ENCODE measurements at regions of chr1 and their contacts with region 1.

Region 1: GRCh38 chr1:70487910-70488665 is 77.0 kb downstream of the CTH start:
- DNase-seq: peak; percentile 33
- H3K4me3 ChIP-seq: no peak overlapping the region
- H3K27ac ChIP-seq: no peak overlapping the region
- H3K4me1 ChIP-seq: peaks cover 19% of the 10 kb centered on the region
- H3K27me3 ChIP-seq: no peaks in the 10 kb centered on the region
- CTCF ChIP-seq: peak; percentile 84 to 85

Region 2: GRCh38 chr1:70034403-70034802 is 453.7 kb before region 1 on chr1:
- CTCF ChIA-PET with region 1: no interaction called
- dilution Hi-C with region 1: no loop called
- in situ Hi-C with region 1: no loop called
- intact Hi-C with region 1: loop called (anchors 1 kb)
- DNase-seq: peak; percentile 43
- H3K4me3 ChIP-seq: no peak overlapping the region
- H3K27ac ChIP-seq: no peak overlapping the region
- H3K4me1 ChIP-seq: peaks cover 7% of the 10 kb centered on the region
- H3K27me3 ChIP-seq: no peaks in the 10 kb centered on the region
- CTCF ChIP-seq: peak; percentile 69

Region 3: DNA sequence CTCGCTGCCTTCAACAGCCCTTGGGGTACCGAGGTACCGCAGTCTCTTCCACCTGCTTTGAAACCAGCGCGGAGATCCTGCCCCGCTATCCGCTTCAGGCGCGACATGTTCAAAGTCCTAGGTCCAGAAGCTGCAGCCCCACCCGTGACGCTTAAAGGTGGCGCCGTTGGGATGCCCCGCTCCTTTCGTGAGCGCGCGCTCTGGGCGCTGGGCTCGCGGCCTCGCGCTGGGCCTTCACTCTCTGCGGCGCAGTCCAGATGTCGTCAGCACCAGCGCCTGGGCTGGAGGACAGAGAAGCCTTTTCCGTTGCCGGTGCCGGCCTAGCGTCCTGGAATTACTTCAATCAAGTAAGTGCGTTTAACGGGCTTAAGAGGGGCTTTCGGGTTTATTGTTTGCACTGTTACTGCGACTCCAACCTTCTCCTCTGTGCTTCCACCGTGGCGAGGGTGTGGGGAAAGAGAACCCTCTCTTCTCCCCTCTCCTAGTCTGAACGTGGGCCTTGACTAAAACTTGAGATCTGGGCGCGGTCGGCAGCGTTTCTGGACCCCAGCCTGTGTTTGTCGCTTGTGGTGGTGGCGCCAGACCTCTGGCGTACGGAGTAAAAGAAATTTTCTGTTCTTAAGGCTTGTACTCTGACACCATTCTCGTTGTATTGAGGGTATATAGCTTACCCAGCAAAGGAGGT is 282.5 kb before region 1 on chr1 and contains the start of gene LRRC40:
- CTCF ChIA-PET with region 1: no interaction called
- dilution Hi-C with region 1: no loop called
- in situ Hi-C with region 1: no loop called
- intact Hi-C with region 1: loop called (anchors 5 kb)
- DNase-seq: peak; percentile 95
- H3K4me3 ChIP-seq: peak within 1 kb of the TSS; percentile 73 to 91 (median 77)
- H3K27ac ChIP-seq: peak within 1 kb of the TSS; percentile 97
- H3K4me1 ChIP-seq: peaks cover 8% of the 10 kb centered on the region
- H3K27me3 ChIP-seq: no peaks in the 10 kb centered on the region
- CTCF ChIP-seq: no peak
- total RNA-seq, gene LRRC40: 18.2 to 20.7 TPM

Region 4: DNA sequence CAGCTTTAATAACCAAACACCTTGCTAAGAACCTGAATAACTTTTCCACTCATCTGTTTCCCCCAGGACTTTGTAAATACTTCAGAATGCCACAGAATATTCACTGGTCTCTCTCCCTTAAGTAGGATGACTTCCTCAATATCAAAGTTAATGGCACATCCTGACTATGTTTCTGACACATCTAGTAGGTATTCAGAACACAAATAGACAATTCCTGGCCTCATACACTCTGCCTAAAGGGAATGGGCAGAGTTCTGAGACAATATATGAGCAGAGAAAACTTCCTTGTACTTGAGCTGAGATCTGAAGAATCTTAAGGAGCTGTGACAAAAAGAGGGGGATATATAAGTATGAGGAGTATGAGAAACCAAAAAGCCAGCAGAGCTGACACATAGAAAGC is 168.3 kb before region 1 on chr1:
- CTCF ChIA-PET with region 1: no interaction called
- dilution Hi-C with region 1: no loop called
- in situ Hi-C with region 1: no loop called
- intact Hi-C with region 1: loop called (anchors 5 kb)
- DNase-seq: peak; percentile 35
- H3K4me3 ChIP-seq: no peak overlapping the region
- H3K27ac ChIP-seq: no peak overlapping the region
- H3K4me1 ChIP-seq: peaks cover 11% of the 10 kb centered on the region
- H3K27me3 ChIP-seq: no peaks in the 10 kb centered on the region
- CTCF ChIP-seq: no peak

Region 5: DNA sequence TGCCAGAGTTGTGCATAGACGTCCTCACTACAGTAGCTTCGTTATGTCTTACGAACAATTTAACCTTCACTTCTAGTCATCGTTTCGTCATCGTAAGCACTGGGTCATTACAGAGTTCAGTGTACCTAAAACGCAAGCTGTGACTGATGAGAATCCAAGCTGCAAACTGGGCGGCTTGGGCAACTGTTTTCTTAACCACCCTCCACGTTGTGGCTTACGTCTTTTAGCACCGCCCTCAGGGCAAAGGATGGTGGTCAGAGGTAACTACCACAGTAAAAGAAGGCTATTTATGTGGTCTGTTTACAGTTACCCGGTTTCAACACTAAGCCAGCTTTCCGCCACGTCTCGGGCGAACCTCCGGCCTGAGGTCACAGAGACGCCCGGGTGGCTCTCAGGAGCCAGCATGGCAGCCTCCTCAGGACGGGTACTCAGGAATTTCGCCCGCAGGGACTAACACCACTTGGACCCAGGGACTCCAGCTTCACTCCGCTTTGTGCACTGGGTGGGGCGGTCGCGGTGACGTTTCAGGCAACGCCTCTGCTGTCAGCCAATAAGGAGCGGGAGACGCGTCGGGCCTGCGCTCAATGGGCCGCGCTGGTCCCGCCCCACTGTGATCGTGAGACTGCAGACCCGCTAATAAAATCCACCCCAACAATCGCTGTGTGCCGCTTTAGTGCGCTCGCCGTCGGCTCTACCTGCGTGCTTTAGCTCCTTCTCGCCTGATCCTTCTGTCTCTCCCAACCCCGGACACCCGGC is 77.3 kb before region 1 on chr1 and contains the start of gene CTH:
- CTCF ChIA-PET with region 1: no interaction called
- dilution Hi-C with region 1: no loop called
- in situ Hi-C with region 1: no loop called
- intact Hi-C with region 1: loop called (anchors 2 kb)
- DNase-seq: peak; percentile 95
- H3K4me3 ChIP-seq: peak within 1 kb of the TSS; percentile 80 to 98 (median 92)
- H3K27ac ChIP-seq: peak within 1 kb of the TSS; percentile 92
- H3K4me1 ChIP-seq: peaks cover 4% of the 10 kb centered on the region
- H3K27me3 ChIP-seq: no peaks in the 10 kb centered on the region
- CTCF ChIP-seq: no peak
- total RNA-seq, gene CTH: 3.5 to 6.2 TPM

Region 6: GRCh38 chr1:70436622-70437251 is 51.4 kb before region 1 on chr1:
- CTCF ChIA-PET with region 1: no interaction called
- dilution Hi-C with region 1: no loop called
- in situ Hi-C with region 1: no loop called
- intact Hi-C with region 1: no loop called
- DNase-seq: no peak
- H3K4me3 ChIP-seq: no peak overlapping the region
- H3K27ac ChIP-seq: no peak overlapping the region
- H3K4me1 ChIP-seq: no peaks in the 10 kb centered on the region
- H3K27me3 ChIP-seq: no peaks in the 10 kb centered on the region
- CTCF ChIP-seq: peak in 1 of 2 donors; percentile 31

Region 7: DNA sequence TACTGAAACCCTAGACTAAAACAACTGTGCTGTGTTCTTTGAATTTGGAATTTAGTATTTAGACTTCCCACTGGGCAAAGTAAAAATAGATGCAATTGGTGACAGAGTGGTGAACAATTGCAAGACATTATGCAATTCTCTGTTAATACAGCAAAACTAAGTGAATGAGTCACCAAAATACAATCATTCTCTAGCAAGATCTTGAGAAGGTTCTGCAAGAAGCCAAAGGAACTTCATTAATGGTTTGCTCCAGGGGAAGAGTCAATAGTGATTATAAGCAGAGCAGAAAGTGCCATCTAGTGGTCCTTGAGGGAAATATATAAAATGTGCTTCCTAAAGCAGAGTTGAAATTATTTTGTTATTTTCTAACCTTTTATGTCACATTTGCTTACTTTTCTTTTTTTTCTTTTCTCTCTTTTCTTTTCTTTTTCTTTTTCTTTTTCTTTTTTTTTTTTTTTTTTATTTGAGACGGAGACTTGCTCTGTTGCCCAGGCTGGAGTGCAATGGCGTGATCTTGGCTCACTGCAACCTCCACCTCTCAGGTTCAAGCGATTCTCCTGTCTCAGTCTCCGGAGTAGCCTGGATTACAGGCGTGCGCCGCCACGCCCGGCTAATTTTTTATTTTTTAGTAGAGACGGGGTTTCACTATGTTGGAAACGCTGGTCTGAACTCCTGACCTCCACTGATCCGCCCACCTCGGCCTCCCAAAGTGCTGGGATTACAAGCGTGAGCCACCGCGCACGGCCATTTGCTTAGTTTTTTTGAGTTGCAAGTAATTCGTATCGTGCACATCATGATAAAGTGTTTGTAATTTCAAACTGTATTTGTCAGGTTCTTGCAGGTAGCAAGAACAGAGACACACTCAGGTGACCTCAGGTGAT is 22.1 kb after region 1 on chr1:
- CTCF ChIA-PET with region 1: no interaction called
- dilution Hi-C with region 1: no loop called
- in situ Hi-C with region 1: no loop called
- intact Hi-C with region 1: loop called (anchors 1 kb)
- DNase-seq: peak; percentile 84
- H3K4me3 ChIP-seq: no peak overlapping the region
- H3K27ac ChIP-seq: no peak overlapping the region
- H3K4me1 ChIP-seq: peaks cover 13% of the 10 kb centered on the region
- H3K27me3 ChIP-seq: no peaks in the 10 kb centered on the region
- CTCF ChIP-seq: peak; percentile 63 to 66

Region 8: DNA sequence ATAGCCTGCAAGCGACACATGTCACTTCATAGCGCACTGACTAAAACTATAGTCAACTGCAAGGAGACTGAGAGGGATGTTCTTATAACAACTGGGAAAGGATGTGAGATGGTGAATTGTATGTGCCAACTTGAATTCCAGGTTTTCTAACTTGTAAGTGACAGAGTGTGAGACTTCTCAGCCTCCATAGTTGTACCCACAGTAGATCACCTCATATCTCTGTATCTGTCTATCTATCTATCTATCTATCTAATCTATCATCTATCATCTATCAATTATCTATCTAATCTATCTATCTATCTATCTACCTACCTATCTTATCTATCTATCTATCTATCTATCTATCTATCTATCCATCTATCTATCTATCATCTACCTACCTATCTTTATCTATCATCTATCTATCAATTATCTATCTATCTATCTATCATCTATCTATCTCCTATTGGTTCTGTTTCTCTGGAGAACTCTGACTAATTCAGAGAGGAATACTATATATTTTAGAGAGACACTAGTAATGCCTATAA is 85.3 kb after region 1 on chr1:
- CTCF ChIA-PET with region 1: no interaction called
- dilution Hi-C with region 1: no loop called
- in situ Hi-C with region 1: no loop called
- intact Hi-C with region 1: no loop called
- DNase-seq: no peak
- H3K4me3 ChIP-seq: no peak overlapping the region
- H3K27ac ChIP-seq: no peak overlapping the region
- H3K4me1 ChIP-seq: no peaks in the 10 kb centered on the region
- H3K27me3 ChIP-seq: no peaks in the 10 kb centered on the region
- CTCF ChIP-seq: no peak